Mammary epithelial cell (primary cell): ENCODE measurements at regions of chr22 and their contacts with region 1.

Region 1: GRCh38 chr22:37594237-37594636 is 14.3 kb upstream of the LGALS2 start:
- DNase-seq: no peak
- H3K4me3 ChIP-seq: no peak overlapping the region
- H3K27ac ChIP-seq: no peak overlapping the region
- H3K4me1 ChIP-seq: no peaks in the 10 kb centered on the region
- H3K27me3 ChIP-seq: no peaks in the 10 kb centered on the region
- CTCF ChIP-seq: no peak

Region 2: GRCh38 chr22:37696657-37697537 is 102.7 kb after region 1 on chr22 and contains the start of gene TRIOBP:
- CTCF ChIA-PET with region 1: interaction called, 11 read pairs
- dilution Hi-C with region 1: no loop called
- in situ Hi-C with region 1: no loop called
- intact Hi-C with region 1: no loop called
- DNase-seq: peak; percentile 68
- H3K4me3 ChIP-seq: peak within 1 kb of the TSS in 1 of 3 experiments; percentile 7
- H3K27ac ChIP-seq: no peak within 1 kb of the TSS
- H3K4me1 ChIP-seq: peaks cover 9% of the 10 kb centered on the region
- H3K27me3 ChIP-seq: no peaks in the 10 kb centered on the region
- CTCF ChIP-seq: peak in 1 of 2 donors; percentile 46
- total RNA-seq, gene TRIOBP: 117 to 138 TPM